Body of pancreas (tissue), 4 donors: ENCODE measurements at regions of chr10 and their contacts with region 1.

Region 1: DNA sequence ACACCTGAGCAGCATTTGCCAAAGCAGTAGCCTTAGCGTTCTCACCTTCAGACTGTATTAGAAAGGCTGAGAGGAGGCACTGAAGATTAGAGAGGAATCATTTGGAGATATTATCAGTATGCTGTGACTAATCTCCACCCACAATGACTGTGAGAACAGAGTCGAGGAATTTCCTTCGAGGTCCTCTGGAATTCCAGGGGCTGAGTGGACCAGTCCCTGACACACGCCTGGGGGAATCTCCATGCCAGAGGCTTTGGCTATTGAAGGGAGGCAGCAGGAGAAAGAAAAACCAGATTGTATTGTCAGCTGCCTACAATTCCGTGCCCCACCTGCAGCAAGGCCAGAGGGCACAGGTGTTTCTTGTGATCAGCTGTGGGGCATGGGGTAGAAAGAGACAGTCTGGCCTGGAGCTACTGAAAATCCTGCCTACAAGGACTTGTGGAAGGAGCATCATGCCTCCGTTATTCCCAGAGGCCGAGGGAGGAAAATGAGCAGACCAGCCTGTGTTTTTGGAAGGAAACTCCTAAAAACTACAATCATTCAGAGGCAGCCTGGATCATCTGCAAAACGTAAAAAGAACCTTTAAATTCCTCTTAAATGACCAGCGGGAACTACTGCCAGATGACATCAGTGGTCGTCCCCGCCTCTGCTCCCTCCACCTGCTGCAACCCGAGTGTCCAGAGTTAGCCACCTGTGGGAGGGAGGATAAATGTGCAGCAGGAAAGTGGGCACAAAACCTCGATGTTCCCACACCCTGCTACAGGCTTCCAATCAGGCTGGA is 25.3 kb upstream of the ANK3 start:
- DNase-seq: peak in 1 of 4 donors; percentile 11
- ATAC-seq: no peak
- H3K4me3 ChIP-seq: no peak overlapping the region
- H3K27ac ChIP-seq: no peak overlapping the region
- H3K4me1 ChIP-seq: no peaks in the 10 kb centered on the region
- H3K27me3 ChIP-seq: no peaks in the 10 kb centered on the region
- CTCF ChIP-seq: no peak
- POLR2A ChIP-seq: no peak

Region 2: GRCh38 chr10:60246382-60246781 is 168.6 kb before region 1 on chr10:
- intact Hi-C with region 1: loop called (anchors 10 kb)
- DNase-seq: no peak
- ATAC-seq: no peak
- H3K4me3 ChIP-seq: no peak overlapping the region
- H3K27ac ChIP-seq: no peak overlapping the region
- H3K4me1 ChIP-seq: no peaks in the 10 kb centered on the region
- H3K27me3 ChIP-seq: no peaks in the 10 kb centered on the region
- CTCF ChIP-seq: no peak
- POLR2A ChIP-seq: no peak

Region 3: DNA sequence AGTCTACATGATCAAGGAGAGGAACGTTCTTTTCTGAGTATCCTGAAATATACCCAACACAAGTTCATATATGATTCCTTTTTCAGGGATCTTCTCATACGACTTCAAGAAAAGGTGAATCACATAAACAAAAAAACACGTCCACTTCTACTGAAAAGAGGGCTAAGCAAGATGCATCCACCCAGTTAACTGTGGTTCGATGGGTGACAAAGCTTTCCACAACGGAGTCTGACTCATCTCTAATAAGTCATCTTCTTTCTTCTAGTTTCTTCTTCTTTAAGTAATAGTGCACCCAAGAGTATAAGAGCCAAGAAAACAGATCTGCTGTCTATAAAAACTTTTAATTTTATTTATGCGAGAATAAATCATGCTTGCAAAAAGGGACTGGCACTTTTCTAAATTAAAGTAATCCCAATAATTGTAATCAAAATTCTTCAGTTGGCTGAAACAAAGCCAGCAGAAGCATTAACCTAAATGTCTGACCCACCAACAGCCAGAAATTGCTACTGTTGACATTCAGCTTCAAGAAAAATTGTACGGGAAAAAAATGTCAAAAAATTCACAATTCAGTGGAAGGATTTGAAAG is 121.6 kb after region 1 on chr10:
- intact Hi-C with region 1: no loop called
- DNase-seq: no peak
- ATAC-seq: no peak
- H3K4me3 ChIP-seq: no peak overlapping the region
- H3K27ac ChIP-seq: no peak overlapping the region
- H3K4me1 ChIP-seq: no peaks in the 10 kb centered on the region
- H3K27me3 ChIP-seq: no peaks in the 10 kb centered on the region
- CTCF ChIP-seq: no peak
- POLR2A ChIP-seq: no peak